Activated naive CD4-positive, alpha-beta T cell treated with anti-CD3 and anti-CD28 coated beads for 36 hours (primary cell): ENCODE measurements at regions of chr10 and their contacts with region 1.

Region 1: DNA sequence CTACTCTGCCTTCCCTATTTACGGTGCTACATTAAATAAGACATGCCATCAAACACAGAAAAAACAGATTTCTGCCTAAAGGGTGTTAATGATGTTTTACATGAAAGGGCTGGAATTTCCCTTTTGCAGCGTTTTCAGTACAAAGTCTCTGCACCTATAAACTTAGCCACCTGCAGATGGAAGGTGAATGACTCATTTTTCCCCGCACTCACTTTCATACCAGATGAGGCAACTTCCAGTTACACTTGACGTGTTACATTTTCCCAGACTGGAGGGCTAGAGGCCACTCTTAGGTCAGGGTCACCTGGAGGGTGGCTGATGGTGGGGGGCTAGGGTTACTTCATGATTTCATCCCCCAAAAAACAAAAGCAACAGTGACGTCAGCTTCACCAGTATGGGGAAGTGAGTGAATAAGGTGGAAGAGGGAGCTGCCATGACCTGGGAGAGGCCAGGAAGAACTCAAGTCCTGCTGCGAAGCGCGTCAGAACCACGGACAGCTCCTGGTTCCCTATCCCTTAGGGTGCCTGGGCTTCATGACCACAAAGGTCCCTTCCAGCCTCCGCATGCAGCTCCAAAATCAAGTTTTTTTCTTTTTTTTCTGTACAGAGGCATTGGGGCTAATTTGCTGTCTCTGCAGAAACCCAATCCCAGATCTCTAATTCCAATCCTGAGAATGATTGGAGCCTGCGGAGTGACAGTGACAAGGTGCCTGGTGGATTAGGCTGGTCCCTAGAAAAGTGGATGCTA is 94.0 kb downstream of the ADARB2 start:
- DNase-seq: peak; percentile 78
- H3K4me3 Mint-ChIP-seq: no peak overlapping the region
- H3K27ac Mint-ChIP-seq: peak overlapping the region; percentile 93
- H3K4me1 Mint-ChIP-seq: peaks cover 24% of the 10 kb centered on the region
- H3K27me3 Mint-ChIP-seq: peaks cover 13% of the 10 kb centered on the region

Region 2: DNA sequence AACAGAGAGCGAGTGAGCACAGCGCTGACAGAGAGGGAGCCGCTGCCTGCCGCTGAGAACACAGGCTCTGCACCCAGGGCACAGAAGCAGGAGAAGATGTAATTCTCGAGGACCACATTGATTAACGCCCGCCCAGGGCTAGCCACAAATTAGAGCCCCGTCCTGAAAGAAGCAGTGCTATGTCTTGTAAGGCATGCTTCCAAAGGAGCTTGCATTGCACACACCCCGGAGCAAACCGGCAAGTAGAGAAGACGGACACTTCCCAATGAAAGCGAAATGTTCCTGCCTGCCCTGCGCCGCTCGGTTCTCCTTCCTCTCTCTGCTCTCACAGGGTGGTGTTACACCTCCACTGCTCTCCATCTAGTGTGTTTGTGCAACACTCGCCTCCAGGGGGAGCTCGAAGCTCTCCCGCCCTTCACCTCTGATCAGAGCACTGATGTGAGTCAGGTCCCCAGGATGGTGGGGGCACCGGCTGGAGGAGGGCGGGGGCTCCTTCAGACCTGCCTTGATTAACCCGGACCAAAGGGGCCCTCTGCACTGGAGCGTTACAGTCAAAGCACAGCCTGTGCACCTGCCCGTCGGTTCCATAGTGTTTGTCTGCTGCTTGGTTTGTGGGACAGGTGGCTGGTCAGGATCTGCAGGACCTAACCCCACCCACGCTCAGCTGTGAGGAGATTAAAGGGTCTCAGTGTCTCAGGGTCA is 222.5 kb before region 1 on chr10:
- CTCF ChIA-PET with region 1: no interaction called
- intact Hi-C with region 1: loop called (anchors 5 kb)
- DNase-seq: peak; percentile 83
- H3K4me3 Mint-ChIP-seq: peak overlapping the region; percentile 44
- H3K27ac Mint-ChIP-seq: no peak overlapping the region
- H3K4me1 Mint-ChIP-seq: peaks cover 7% of the 10 kb centered on the region
- H3K27me3 Mint-ChIP-seq: peaks cover 20% of the 10 kb centered on the region

Region 3: DNA sequence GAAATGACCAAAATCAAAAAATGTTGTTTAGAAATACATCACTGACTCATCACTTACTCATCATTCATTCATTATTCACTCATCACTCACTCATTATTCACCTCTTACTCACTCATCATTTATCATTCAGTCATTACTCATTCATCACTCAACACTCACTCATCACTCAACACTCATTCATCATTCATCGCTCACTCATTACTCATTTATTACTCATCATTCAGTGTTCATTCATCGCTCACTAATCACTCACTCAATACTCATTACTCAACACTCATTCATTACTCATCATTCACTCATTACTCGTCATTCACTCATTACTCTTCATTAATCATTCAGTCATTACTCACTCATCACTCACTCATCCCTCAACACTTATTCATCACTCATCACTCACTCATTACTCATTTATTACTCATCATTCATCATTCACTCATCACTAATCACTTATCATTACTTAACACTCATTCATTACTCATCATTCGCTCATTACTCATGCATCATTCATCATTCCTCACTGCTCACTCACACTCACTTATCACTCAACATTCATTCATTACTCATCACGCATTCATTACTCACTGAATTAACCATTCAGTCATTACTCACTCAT is 144.5 kb before region 1 on chr10:
- CTCF ChIA-PET with region 1: no interaction called
- intact Hi-C with region 1: loop called (anchors 1 kb)
- DNase-seq: no peak
- H3K4me3 Mint-ChIP-seq: no peak overlapping the region
- H3K27ac Mint-ChIP-seq: no peak overlapping the region
- H3K4me1 Mint-ChIP-seq: no peaks in the 10 kb centered on the region
- H3K27me3 Mint-ChIP-seq: no peaks in the 10 kb centered on the region

Region 4: GRCh38 chr10:1631282-1631681 is 12.1 kb before region 1 on chr10:
- CTCF ChIA-PET with region 1: no interaction called
- intact Hi-C with region 1: loop called (anchors 1 kb)
- DNase-seq: peak; percentile 61
- H3K4me3 Mint-ChIP-seq: peak overlapping the region; percentile 45
- H3K27ac Mint-ChIP-seq: peak overlapping the region; percentile 68
- H3K4me1 Mint-ChIP-seq: peaks cover 6% of the 10 kb centered on the region
- H3K27me3 Mint-ChIP-seq: peaks cover 15% of the 10 kb centered on the region

Region 5: GRCh38 chr10:1674501-1674900 is 31.2 kb after region 1 on chr10:
- CTCF ChIA-PET with region 1: no interaction called
- intact Hi-C with region 1: loop called (anchors 1 kb)
- DNase-seq: no peak
- H3K4me3 Mint-ChIP-seq: no peak overlapping the region
- H3K27ac Mint-ChIP-seq: no peak overlapping the region
- H3K4me1 Mint-ChIP-seq: peaks cover 6% of the 10 kb centered on the region
- H3K27me3 Mint-ChIP-seq: peaks cover 11% of the 10 kb centered on the region

Region 6: GRCh38 chr10:1737222-1738061 is 94.1 kb after region 1 on chr10 and contains the start of gene ADARB2:
- CTCF ChIA-PET with region 1: no interaction called
- intact Hi-C with region 1: loop called (anchors 1 kb)
- DNase-seq: peak; percentile 44
- H3K4me3 Mint-ChIP-seq: peak within 1 kb of the TSS; percentile 60
- H3K27ac Mint-ChIP-seq: no peak within 1 kb of the TSS
- H3K4me1 Mint-ChIP-seq: peaks cover 19% of the 10 kb centered on the region
- H3K27me3 Mint-ChIP-seq: peaks cover 75% of the 10 kb centered on the region
- total RNA-seq, gene ADARB2: 1.3 to 1.4 TPM

Region 7: DNA sequence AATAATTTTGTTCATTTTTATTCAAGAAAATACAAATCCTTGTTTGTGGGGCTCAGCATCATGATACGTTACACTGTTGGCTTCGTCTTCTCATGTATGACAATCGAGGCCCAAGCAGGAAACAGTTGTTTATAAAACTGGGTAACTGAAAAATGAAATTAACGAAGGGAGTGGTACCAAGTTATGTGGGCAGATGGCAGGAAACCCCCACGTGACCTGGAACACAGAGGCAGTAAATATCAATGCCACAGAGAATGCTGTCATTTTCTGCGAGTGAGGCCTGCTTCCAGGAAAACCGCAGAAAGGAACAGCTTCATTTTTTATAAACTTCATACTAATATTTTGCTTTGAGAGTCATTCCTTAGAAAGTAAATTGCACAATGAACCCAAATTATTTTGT is 295.0 kb after region 1 on chr10:
- CTCF ChIA-PET with region 1: no interaction called
- intact Hi-C with region 1: loop called (anchors 1 kb)
- DNase-seq: peak; percentile 74
- H3K4me3 Mint-ChIP-seq: peak overlapping the region; percentile 15
- H3K27ac Mint-ChIP-seq: peak overlapping the region; percentile 94
- H3K4me1 Mint-ChIP-seq: peaks cover 23% of the 10 kb centered on the region
- H3K27me3 Mint-ChIP-seq: no peaks in the 10 kb centered on the region

Region 8: GRCh38 chr10:1992930-1993329 is 349.6 kb after region 1 on chr10:
- CTCF ChIA-PET with region 1: no interaction called
- intact Hi-C with region 1: no loop called
- DNase-seq: no peak
- H3K4me3 Mint-ChIP-seq: no peak overlapping the region
- H3K27ac Mint-ChIP-seq: no peak overlapping the region
- H3K4me1 Mint-ChIP-seq: no peaks in the 10 kb centered on the region
- H3K27me3 Mint-ChIP-seq: no peaks in the 10 kb centered on the region